ENCODE measurements at regions of chrX and their contacts with region 1.

Region 1: DNA sequence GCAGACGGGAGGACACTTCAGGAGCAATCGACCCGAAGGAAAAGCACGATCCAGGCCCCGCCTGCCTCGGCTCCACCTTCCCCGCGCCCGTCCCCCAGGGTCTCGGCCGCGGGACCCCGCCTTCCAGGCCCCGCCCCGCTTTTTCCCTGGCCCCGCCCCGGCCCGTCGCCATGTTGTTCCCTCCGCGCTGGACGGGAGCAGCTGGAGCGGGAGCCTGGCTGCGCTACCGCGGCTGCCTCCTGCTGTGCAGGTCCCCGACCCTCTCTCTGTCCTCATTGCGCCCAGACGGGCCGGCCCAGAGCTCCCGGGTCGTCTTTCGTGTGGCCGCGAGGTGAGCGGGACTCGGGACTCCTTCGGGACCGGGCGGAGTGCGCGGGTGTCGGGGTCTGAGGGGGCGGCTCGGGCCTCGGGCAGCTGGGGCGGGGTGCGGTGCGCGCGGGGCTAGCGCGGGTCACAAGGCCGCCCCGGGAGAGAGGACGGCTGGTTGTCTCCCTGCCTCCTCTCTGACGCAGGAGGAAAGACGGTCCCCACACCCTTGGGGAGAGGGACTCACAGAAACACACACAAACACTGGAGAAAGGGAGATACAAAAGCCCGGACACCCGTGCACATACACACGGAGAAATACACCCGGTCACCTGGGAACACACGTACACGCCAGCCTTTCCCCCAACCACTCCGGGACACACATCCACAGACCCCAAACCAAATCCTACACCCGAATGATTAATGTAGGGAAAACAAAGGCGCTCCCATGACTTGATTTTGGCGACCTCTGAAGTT is at the start of gene RAB9A:
- DNase-seq: peak; percentile 76
- H3K4me3 Mint-ChIP-seq: peak within 1 kb of the TSS; percentile 89
- H3K27ac Mint-ChIP-seq: peak within 1 kb of the TSS; percentile 95
- H3K4me1 Mint-ChIP-seq: peaks cover 51% of the 10 kb centered on the region
- H3K27me3 Mint-ChIP-seq: no peaks in the 10 kb centered on the region
- total RNA-seq, gene RAB9A: 9.4 and 11.8 TPM in 2 replicates

Region 2: DNA sequence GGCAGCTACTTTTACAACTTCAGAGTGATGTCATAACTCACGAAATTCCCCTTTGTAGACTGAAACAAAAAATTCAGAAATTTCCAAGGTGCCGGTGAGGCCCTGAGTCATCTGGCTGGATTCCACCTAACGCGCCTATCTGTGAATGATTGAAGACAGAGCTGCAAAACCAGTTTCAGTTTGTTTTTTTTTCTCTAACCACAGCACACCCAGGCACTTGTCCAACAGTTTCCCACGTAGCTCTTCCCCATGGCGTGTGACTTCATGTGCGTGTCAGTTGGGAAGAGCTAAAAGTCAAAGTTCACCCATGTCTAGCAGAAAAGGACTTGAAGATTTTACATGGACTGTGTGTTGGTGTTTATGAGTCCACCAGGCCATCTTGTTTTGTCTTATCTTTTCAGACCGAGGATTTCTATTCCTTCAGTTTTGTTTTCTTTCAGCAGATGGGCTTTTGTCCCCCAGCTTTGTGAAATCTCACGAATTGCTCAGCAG is 19.9 kb before region 1 on chrX:
- intact Hi-C with region 1: loop called (anchors 1 kb)
- DNase-seq: peak; percentile 29
- H3K4me3 Mint-ChIP-seq: peak overlapping the region; percentile 47
- H3K27ac Mint-ChIP-seq: peak overlapping the region; percentile 90
- H3K4me1 Mint-ChIP-seq: peaks cover 13% of the 10 kb centered on the region
- H3K27me3 Mint-ChIP-seq: no peaks in the 10 kb centered on the region

Measured in activated T-helper 1 cell treated with anti-CD3 and anti-CD28 coated beads, Interleukin-12 subunit alpha, Interleukin-12 subunit beta, Interleukin-2, Interleukin-4 antibody, amounts not matched to agents 30 ng/mL and 10 ng/mL and 1 ng/mL, durations not matched to agents 14 hours and 24 hours and 36 hours (primary cell).